Panc1 (cell line): ENCODE measurements at regions of chr4 and their contacts with region 1.

Region 1: GRCh38 chr4:31108762-31109161 is 388.6 kb downstream of the PCDH7 start:
- DNase-seq: no peak
- ATAC-seq: no peak
- H3K4me3 ChIP-seq: no peak overlapping the region
- H3K27ac ChIP-seq: no peak overlapping the region
- H3K4me1 ChIP-seq: no peaks in the 10 kb centered on the region
- H3K27me3 ChIP-seq: no peaks in the 10 kb centered on the region
- CTCF ChIP-seq: no peak

Region 2: DNA sequence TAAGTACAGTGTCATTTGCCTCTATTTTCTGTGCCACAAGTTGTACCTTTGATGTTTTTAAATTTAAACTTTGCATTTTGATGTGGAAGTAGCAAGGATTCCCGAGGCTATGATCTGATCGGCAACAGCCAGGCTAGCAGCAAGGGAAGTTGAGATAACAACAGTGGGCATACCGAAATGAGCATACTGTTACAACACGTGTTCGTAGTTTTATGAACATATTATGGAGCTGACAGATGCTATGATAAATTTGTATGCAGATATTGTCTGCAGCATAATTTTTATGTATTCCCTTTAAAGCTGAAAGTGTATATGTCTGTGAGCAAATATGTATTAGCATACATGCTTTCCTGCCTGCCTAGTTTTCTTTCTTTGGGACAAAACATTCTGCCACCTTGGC is 82.5 kb before region 1 on chr4:
- CTCF ChIA-PET with region 1: no interaction called
- POLR2A ChIA-PET with region 1: no interaction called
- in situ Hi-C with region 1: no loop called
- intact Hi-C with region 1: no loop called
- DNase-seq: no peak
- ATAC-seq: no peak
- H3K4me3 ChIP-seq: no peak overlapping the region
- H3K27ac ChIP-seq: no peak overlapping the region
- H3K4me1 ChIP-seq: no peaks in the 10 kb centered on the region
- H3K27me3 ChIP-seq: no peaks in the 10 kb centered on the region
- CTCF ChIP-seq: no peak

Region 3: DNA sequence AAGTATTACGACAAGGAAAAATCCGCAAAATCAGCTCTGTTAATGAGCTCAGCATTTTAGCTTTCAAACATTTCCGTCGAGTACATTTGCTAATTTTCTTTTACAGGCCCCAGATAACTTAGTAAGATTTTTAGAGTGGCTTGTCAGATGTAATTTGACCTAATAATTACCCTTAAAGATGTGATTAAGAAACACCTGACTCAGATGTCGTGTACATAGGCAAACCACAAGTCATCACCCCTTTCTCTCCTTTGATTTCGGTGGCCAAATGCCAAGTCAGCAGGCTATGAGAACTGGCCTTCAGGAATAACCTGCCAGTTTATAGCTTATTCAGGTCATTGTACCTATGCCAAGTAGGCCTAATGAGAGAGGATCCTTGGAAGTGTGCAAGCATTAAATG is 18.9 kb before region 1 on chr4:
- CTCF ChIA-PET with region 1: no interaction called
- POLR2A ChIA-PET with region 1: no interaction called
- in situ Hi-C with region 1: no loop called
- intact Hi-C with region 1: loop called (anchors 1 kb)
- DNase-seq: no peak
- ATAC-seq: peak; percentile 78
- H3K4me3 ChIP-seq: no peak overlapping the region
- H3K27ac ChIP-seq: no peak overlapping the region
- H3K4me1 ChIP-seq: no peaks in the 10 kb centered on the region; the same call in 1 of the 2 replicates
- H3K27me3 ChIP-seq: no peaks in the 10 kb centered on the region
- CTCF ChIP-seq: no peak

Region 4: DNA sequence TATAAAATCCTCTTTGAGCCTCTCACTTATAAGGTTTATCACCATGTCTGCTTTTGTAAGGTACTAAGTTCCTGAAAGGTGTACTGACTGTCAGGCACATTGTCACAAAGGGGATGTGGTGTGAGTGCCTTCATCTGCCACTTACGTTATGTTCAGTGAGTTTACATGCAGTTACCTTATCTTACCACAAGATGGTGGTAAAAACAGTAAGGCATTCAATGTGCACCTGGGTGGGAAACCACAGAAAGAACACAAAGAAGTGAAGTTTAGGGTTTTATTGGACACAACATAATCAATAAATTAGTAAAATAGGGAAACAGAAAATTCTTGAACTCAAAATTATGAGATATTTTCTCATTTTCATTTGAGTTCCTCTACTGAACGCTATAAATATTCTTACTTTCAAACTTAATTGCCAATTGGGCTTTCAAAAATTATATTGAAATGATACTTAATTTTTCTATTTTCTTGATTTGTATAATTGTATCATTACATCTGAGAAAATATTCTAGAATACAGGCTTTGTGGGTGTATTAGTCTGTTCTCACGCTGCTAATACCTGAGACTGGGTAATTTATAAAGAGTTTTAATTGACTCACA is 262.2 kb after region 1 on chr4:
- CTCF ChIA-PET with region 1: no interaction called
- POLR2A ChIA-PET with region 1: no interaction called
- in situ Hi-C with region 1: no loop called
- intact Hi-C with region 1: no loop called
- DNase-seq: peak; percentile 32
- ATAC-seq: no peak
- H3K4me3 ChIP-seq: no peak overlapping the region
- H3K27ac ChIP-seq: no peak overlapping the region
- H3K4me1 ChIP-seq: no peaks in the 10 kb centered on the region
- H3K27me3 ChIP-seq: no peaks in the 10 kb centered on the region
- CTCF ChIP-seq: peak; percentile 62; the same call in 1 of the 2 replicates